ENCODE measurements at regions of chr19 and their contacts with region 1.

Region 1: DNA sequence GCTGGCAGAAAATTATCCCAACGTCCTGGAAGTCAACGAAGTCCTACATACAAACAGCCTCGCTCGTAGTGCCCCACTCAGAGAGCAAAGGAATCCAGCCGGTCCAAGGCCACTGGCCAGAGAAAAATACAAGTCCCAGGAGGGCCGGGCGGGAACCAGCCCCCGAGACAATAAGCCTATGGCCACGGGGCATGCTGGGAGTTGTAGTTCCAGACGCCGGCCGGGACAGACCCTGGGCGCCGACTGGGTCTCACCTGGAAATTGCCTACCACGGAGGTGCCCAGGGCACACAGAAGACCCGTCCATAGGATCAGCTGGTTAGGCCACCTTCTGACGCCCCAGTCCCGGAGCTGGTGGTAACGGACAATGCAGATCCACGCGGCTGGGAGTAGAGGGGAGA is 5.4 kb downstream of the TMEM150B start:
- DNase-seq: no peak
- H3K4me3 ChIP-seq: no peak overlapping the region
- H3K27me3 ChIP-seq: no peaks in the 10 kb centered on the region
- CTCF ChIP-seq: no peak

Region 2: DNA sequence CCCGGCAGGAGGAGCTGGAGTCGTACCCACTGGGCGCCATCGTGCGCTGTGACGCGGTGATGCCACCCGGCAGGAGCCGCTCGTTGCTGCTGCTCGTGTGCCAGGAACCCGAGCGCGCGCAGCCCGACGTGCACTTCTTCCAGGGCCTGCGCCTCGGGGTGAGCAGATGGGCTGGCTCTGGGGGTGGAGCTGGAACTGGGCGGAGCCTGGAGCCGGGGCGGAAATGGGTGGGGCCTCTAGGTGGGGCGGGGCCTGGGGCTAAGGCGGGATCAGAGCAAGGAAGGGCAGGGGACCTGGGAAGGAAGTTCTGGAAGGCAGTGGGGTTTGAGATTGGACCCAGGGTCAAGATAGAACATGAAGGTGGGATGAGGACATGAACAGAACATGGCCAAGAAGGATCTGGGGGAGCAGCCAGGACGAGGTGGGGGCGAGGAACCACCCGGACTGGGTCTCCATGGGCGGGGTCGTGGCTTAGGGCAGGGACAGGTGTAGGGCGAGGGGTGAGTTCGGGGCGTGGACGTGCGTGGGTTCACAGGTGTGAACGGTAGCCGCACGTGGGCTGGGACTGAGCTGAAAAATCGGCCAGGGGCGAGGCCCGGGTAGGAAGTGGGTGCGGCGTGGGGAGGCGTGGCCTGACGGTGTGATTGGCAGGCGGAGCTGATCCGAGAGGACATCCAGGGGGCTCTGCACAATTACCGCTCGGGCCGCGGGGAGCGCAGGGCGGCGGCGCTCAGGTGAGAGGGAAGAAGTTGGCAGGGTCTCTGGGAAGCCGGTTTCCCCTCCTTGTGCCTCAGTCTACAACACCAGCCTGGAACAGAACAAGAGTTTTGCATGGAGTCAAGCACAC is 239.4 kb before region 1 on chr19:
- CTCF ChIA-PET with region 1: no interaction called
- POLR2A ChIA-PET with region 1: interaction called, 14 read pairs
- DNase-seq: no peak
- H3K4me3 ChIP-seq: peak overlapping the region; percentile 47
- H3K27me3 ChIP-seq: peaks cover 13% of the 10 kb centered on the region
- CTCF ChIP-seq: no peak

Region 3: GRCh38 chr19:55228403-55229031 is 91.3 kb before region 1 on chr19 and contains the start of gene TMEM86B:
- CTCF ChIA-PET with region 1: no interaction called
- POLR2A ChIA-PET with region 1: no interaction called
- DNase-seq: no peak
- H3K4me3 ChIP-seq: no peak within 1 kb of the TSS
- H3K27me3 ChIP-seq: no peaks in the 10 kb centered on the region
- CTCF ChIP-seq: no peak
- polyA plus RNA-seq, gene TMEM86B: 0.56 and 1.5 TPM in 2 replicates

Region 4: DNA sequence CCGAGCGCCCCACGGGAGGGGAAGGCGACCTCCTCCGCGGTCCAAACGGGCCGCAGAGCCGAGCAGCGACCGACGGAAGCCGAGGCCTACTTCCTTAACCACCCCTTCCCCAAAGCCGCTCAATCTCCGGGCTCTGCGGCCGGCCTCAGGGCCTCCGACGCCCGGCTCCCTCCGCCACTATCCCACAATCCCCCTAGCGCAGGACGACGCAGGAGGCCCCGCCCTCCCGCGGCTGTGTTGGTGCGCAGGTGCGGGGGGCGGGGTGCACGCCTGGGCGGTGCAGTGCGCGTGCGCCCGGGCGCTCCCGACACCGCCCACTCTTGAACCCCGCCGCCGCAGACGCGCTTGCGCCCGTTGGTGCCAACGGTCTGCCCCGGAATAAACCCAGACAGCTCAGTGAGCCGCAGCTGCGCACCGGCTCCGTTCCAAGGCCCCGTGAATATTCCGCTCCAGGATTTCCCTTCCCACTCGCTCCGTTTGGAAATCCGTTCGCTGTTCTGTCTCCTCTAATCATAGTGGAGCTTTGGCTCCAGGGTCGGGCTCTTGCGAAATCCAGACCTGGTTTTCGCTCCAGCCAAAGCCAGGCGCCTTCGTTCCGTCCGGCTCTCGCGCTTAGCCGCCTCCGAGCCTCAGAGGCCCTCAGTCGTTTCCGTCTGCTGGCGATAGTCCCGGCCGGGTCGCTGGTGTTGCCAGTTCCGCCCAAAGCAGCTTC is 60.8 kb before region 1 on chr19 and contains the start of gene PPP6R1:
- CTCF ChIA-PET with region 1: no interaction called
- POLR2A ChIA-PET with region 1: no interaction called
- DNase-seq: peak; percentile 98
- H3K4me3 ChIP-seq: peak within 1 kb of the TSS; percentile 79
- H3K27me3 ChIP-seq: no peaks in the 10 kb centered on the region
- CTCF ChIP-seq: no peak
- polyA plus RNA-seq, gene PPP6R1: 25.9 and 42.5 TPM in 2 replicates

Measured in BJ (cell line).